ENCODE measurements at regions of chr1 and their contacts with region 1.

Region 1: GRCh38 chr1:244652699-244653466 is at the start of gene DESI2:
- DNase-seq: peak; percentile 100
- H3K4me3 ChIP-seq: peak within 1 kb of the TSS; percentile 78 to 92 (median 86)
- H3K27ac ChIP-seq: peak within 1 kb of the TSS; percentile 83 to 98 (median 97)
- H3K4me1 ChIP-seq: peaks cover 0 to 32% (median 29%) of the 10 kb centered on the region in 4 donors
- H3K27me3 ChIP-seq: no peaks in the 10 kb centered on the region
- CTCF ChIP-seq: peak in 3 of 4 experiments; percentile 14 to 62 (median 42)
- EP300 ChIP-seq: no peak
- POLR2A ChIP-seq: peak; percentile 27 to 66
- total RNA-seq, gene DESI2: 34.2 to 37.3 (median 36.9) TPM

Region 2: DNA sequence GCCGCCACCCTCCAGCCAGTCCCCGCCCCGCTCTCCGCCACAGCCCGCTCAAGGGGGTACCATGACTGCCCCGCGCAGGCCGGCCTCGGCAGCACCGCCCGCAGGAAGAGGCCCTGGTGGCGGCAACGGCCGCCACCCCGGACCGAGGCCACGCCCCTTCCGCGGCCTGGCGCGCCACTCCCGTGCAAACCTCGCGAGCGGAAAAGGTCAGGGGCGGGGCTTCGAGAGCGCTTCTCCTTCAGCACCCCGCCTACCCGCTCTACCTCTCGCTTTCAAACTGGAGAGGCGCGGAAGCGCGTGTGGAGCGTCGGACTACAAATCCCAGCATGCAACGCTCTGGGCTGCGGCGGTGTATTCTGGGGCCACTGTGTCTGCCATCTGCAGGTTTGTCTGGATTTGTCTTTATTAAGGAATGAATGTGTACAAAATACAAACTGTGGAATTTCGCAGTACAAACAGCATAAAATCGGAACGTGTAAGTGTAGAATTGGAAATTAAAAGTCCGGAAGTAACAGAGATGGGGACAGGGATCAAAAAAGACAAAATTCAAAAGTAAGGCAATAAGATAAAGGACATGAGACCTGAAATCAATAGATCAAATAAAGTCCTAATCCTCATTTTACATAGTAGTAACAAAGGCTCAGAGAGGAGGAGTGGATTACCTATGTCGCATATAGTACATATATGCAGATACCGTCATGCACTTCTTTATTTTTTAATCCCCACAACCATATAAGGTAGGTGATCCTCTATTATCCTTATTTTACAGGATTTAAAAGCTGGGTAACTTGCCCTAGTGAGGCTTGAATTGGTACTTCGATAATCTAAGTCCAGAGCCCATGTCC is 200.7 kb before region 1 on chr1:
- intact Hi-C with region 1: loop called (anchors 2 kb)
- DNase-seq: peak; percentile 99
- H3K4me3 ChIP-seq: peak overlapping the region; percentile 76 to 94 (median 88)
- H3K27ac ChIP-seq: peak overlapping the region; percentile 93 to 99 (median 97)
- H3K4me1 ChIP-seq: peaks cover 0 to 40% (median 33%) of the 10 kb centered on the region in 4 donors
- H3K27me3 ChIP-seq: no peaks in the 10 kb centered on the region
- CTCF ChIP-seq: peak in 1 of 4 experiments; percentile 39
- EP300 ChIP-seq: no peak
- POLR2A ChIP-seq: no peak

Region 3: GRCh38 chr1:244730153-244730933 is 77.5 kb after region 1 on chr1:
- intact Hi-C with region 1: loop called (anchors 5 kb)
- DNase-seq: no peak
- H3K4me3 ChIP-seq: peak overlapping the region; percentile 36 to 62 (median 60)
- H3K27ac ChIP-seq: peak overlapping the region in 3 of 4 donors; percentile 57 to 68 (median 60)
- H3K4me1 ChIP-seq: peaks cover 0 to 10% (median 8%) of the 10 kb centered on the region in 4 donors
- H3K27me3 ChIP-seq: no peaks in the 10 kb centered on the region
- CTCF ChIP-seq: no peak
- EP300 ChIP-seq: no peak
- POLR2A ChIP-seq: no peak

Region 4: DNA sequence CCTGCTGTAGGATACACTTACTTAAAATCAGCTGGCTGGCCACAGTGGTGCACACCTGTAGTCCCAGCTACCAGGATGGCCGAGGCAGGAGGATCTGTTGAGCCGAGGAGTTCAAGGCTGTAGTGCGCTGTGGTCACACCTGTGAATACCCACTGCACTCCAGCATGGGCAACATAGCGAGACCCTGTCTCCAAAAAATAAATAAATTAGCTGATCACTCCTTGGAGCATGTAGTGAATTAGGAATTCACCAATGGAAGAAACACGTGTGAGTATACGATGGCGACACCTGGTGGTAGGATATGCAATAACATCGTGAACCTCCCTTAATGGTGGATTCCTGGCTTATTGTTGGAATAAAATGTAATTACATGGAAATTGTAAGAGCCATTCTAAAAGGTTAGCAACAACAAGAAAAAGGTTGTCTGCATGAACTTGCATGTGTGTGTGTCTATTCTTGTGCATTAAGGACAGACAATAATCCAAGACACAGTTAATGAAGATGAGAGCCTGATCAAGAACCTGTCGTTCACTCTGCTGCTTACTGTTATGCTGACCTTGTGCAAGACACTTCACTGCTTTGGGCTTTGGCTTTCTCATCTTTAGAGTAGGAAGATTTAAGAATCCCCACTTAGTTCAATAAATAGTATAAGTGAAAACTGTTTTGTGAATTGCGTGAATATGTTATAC is 144.0 kb after region 1 on chr1:
- intact Hi-C with region 1: loop called (anchors 2 kb)
- DNase-seq: peak; percentile 72
- H3K4me3 ChIP-seq: no peak overlapping the region
- H3K27ac ChIP-seq: no peak overlapping the region
- H3K4me1 ChIP-seq: peaks cover 0 to 6% (median 0%) of the 10 kb centered on the region in 4 donors
- H3K27me3 ChIP-seq: no peaks in the 10 kb centered on the region
- CTCF ChIP-seq: peak; percentile 71 to 84 (median 79)
- EP300 ChIP-seq: no peak
- POLR2A ChIP-seq: no peak